ENCODE measurements at regions of chr11 and their contacts with region 1.

Region 1: DNA sequence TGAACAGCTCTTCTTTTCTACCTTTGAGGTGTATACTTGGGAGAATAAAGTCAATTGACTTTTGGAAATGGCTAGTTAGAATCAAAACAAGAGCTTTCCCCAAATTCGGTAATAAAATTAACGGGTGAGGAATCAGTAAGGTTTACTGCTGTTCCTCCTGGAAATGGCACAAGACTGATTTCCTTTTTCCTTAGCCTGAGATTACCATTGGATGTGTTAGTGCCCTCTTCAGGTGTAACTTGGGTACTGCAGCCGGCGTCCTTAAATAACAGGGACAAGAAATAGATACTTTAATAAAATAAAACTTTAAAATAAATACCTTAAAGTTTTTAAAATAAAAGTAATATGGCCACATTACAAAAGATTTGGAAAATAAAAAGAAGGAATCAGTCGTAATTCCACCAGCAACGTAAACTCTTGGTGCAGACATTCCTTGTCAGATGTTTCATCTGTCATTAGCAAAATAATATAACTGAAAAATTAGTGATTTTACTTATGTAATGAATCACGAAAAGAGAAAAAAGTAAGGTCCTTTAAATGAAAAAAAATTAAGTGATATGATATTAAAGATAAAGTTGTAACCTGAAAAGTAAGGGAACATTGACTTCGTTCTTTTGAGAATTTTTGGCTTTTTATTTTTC is 29.7 kb downstream of the ZFTA start:
- DNase-seq: peak; percentile 81
- H3K4me3 ChIP-seq: no peak overlapping the region
- H3K27ac ChIP-seq: no peak overlapping the region
- H3K4me1 ChIP-seq: peaks cover 0 to 10% (median 4%) of the 10 kb centered on the region in 4 donors
- H3K27me3 ChIP-seq: no peaks in the 10 kb centered on the region
- CTCF ChIP-seq: peak; percentile 76 to 97 (median 89)
- EP300 ChIP-seq: no peak
- POLR2A ChIP-seq: no peak

Region 2: GRCh38 chr11:63478896-63479295 is 259.9 kb before region 1 on chr11:
- intact Hi-C with region 1: loop called (anchors 5 kb)
- DNase-seq: peak; percentile 76
- H3K4me3 ChIP-seq: no peak overlapping the region
- H3K27ac ChIP-seq: peak overlapping the region; percentile 8 to 46 (median 41)
- H3K4me1 ChIP-seq: peaks cover 0 to 6% (median 0%) of the 10 kb centered on the region in 4 donors
- H3K27me3 ChIP-seq: no peaks in the 10 kb centered on the region
- CTCF ChIP-seq: peak; percentile 87 to 94 (median 90)
- EP300 ChIP-seq: no peak
- POLR2A ChIP-seq: no peak

Region 3: GRCh38 chr11:63490551-63491239 is 248.1 kb before region 1 on chr11 and contains the start of gene PLAAT5:
- intact Hi-C with region 1: no loop called
- DNase-seq: peak; percentile 76
- H3K4me3 ChIP-seq: peak within 1 kb of the TSS; percentile 54 to 65 (median 57)
- H3K27ac ChIP-seq: peak within 1 kb of the TSS; percentile 76 to 86 (median 82)
- H3K4me1 ChIP-seq: peaks cover 0 to 31% (median 18%) of the 10 kb centered on the region in 4 donors
- H3K27me3 ChIP-seq: no peaks in the 10 kb centered on the region
- CTCF ChIP-seq: no peak
- EP300 ChIP-seq: no peak
- POLR2A ChIP-seq: no peak
- total RNA-seq, gene PLAAT5: 2.0 to 8.4 (median 3.2) TPM

Region 4: DNA sequence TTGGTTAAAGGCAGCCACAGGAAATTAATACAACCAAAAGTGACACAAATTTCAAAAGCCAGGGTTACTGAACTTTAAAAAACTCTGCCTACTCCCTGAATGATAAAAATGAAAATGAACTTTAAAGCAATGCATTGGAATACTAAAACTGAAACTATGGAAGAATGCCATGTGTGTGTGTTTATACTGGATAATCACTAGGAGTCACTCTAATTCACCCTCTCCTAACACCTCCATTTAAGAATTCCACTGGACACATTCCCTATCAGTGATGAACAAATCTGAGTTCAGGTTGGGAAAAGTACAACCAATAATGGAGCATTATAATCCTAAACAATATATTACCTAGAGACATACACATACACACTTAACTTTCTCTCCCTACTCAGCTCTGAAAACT is 97.1 kb before region 1 on chr11:
- intact Hi-C with region 1: loop called (anchors 2 kb)
- DNase-seq: no peak
- H3K4me3 ChIP-seq: no peak overlapping the region
- H3K27ac ChIP-seq: no peak overlapping the region
- H3K4me1 ChIP-seq: peaks cover 0 to 6% (median 0%) of the 10 kb centered on the region in 4 donors
- H3K27me3 ChIP-seq: no peaks in the 10 kb centered on the region
- CTCF ChIP-seq: peak in 1 of 4 experiments; percentile 11
- EP300 ChIP-seq: no peak
- POLR2A ChIP-seq: no peak

Region 5: GRCh38 chr11:63671322-63672155 is 67.3 kb before region 1 on chr11 and contains the start of gene ATL3:
- intact Hi-C with region 1: loop called (anchors 1 kb)
- DNase-seq: peak; percentile 99
- H3K4me3 ChIP-seq: peak within 1 kb of the TSS; percentile 66 to 81 (median 74)
- H3K27ac ChIP-seq: peak within 1 kb of the TSS; percentile 96 to 98 (median 98)
- H3K4me1 ChIP-seq: peaks cover 0 to 42% (median 40%) of the 10 kb centered on the region in 4 donors
- H3K27me3 ChIP-seq: no peaks in the 10 kb centered on the region
- CTCF ChIP-seq: no peak
- EP300 ChIP-seq: no peak
- POLR2A ChIP-seq: no peak
- total RNA-seq, gene ATL3: 97.8 to 115 (median 102) TPM

Region 6: DNA sequence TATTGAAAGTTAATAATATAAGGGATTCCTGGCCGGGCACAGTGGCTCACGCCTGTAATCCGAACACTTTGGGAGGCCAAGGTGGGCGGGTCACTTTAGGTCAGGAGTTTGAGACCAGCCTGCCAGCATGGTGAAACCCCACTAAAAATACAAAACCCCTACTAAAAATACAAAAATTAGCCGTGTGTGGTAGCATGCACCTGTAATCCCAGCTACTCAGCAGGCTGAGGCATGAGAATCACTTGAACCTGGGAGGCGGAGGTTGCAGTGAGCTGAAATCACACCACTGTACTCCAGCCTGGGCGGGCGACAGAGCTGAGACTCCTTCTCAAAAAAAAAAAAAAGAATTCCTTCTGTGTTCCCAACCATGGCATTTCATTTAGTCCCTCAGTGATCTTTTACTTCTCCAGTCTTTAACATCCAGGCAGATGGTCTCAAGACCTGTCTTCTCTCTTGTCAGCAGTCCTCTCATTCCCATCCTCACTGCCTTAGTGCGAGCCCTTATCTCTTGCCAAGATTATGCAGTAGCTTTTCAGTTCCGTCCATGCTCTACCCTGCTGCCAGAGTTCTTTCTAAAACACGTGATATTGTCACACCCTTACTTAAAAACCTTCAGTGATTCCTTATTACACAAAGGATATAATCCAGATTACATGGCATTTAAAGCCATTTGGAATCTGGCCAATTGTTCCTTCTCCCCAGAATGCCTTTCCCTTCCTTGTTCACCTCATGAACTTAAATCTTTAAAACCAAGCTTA is 39.7 kb before region 1 on chr11:
- intact Hi-C with region 1: loop called (anchors 5 kb)
- DNase-seq: no peak
- H3K4me3 ChIP-seq: no peak overlapping the region
- H3K27ac ChIP-seq: peak overlapping the region in 1 of 4 donors; percentile 33
- H3K4me1 ChIP-seq: peaks cover 0 to 21% (median 14%) of the 10 kb centered on the region in 4 donors
- H3K27me3 ChIP-seq: no peaks in the 10 kb centered on the region
- CTCF ChIP-seq: no peak
- EP300 ChIP-seq: no peak
- POLR2A ChIP-seq: no peak